Pancreas (tissue), 10 donors: ENCODE measurements at regions of chr1 and their contacts with region 1.

Region 1: DNA sequence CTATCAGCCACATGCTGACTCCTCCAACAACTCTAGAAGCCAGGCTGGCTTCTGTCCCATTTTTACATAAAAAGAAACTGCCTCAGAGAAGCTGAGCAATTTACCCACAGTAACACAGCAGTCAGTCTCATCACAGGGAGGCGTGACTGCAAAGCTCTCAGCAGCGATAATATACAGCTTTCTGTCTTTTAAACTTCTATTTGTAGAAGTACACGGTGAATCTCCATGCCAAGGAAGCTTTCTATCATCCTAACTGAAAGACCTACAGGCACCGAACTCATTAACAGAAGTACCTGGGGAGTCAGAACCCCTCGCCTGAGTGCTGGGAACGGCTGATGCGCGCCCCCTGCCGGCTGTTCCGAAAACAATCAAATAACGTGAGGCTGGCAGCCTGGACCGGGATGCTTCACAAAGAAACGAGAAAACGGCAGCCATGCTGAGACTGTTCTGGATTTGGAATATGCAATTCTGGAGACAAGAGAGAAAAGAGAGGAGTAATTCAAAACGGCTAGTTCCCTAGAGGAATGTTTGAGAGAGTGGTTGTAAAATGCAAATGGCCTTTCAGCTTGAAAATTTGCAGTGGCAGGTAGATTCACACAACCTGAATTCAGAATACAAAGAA is 43.5 kb upstream of the RAB4A start:
- DNase-seq: peak; percentile 68 to 92 (median 84)
- ATAC-seq: peak; percentile 29 to 66 (median 62)
- H3K4me3 ChIP-seq: no peak overlapping the region
- H3K27ac ChIP-seq: no peak overlapping the region
- H3K4me1 ChIP-seq: peaks cover 16 to 49% (median 31%) of the 10 kb centered on the region in 3 donors
- H3K27me3 ChIP-seq: no peaks in the 10 kb centered on the region
- CTCF ChIP-seq: peak; percentile 68 to 86 (median 82)

Region 2: DNA sequence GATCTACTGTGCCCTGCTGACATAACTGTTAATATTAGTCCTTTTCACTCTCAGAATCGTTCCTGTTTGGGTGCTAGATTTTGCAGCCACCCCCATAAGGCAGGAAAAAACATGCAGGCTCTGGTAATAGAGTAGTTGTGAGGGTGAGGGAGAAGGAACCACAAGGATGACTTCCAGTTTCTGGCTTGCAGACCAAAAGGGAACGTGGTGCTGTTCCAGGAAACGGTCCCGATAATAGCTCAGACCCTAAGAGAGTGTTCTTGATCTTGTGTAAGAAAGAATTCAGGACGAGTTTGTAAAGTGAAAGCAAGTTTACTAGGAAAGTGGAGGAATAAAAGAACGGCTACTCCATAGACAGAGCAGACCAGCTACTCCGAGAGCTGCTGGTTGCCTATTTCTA is 542.8 kb before region 1 on chr1:
- intact Hi-C with region 1: loop called in 1 of 3 experiments (anchors 10 kb)
- DNase-seq: no peak
- ATAC-seq: peak in 2 of 4 donors; percentile 52 to 54
- H3K4me3 ChIP-seq: no peak overlapping the region
- H3K27ac ChIP-seq: no peak overlapping the region
- H3K4me1 ChIP-seq: no peaks in the 10 kb centered on the region
- H3K27me3 ChIP-seq: peaks cover 0 to 4% (median 0%) of the 10 kb centered on the region in 4 donors
- CTCF ChIP-seq: no peak

Region 3: DNA sequence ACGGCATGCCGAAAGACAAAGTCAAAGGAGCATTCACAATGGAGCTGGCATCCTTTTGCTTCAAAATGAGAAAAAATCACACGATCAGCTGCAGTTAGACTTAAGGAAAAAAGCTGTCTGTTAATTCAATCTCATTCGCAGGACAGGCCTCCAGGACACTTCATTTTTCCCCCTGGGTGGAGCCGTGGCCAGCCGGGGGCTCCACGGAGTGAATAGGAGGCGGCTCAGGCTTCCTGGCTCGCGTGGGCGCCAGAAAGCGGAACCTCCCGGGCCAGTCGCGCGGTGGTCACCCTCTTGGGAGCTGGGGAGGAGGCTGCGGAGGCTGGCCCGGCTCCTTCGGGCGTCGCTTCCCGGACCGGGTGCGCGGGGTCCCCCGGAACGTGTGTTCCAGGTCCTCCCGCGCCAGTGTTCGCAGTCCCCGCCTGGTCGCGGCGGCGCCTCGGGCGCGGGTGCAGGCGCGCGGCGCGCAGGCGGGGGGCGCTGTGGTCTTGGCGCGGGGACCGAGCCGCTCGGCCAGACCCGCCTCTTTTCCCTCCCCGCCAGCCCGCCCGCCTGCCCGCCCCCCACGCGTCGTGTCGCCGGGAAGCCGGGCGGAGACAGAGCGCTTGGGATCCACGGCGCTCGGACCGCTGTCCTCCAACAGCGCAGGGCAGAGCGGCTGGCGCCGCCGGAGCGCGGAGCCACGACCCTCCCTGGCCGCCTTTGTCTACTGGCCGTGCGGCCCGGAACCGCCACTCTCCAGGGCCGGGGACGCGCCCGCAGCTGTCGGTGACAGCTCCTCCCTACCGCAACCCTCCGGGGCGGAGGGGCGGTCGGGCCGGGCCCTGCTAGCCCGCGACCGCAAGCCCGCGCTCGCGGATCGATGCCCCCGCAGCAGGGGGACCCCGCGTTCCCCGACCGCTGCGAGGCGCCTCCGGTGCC is 492.3 kb before region 1 on chr1 and contains the start of gene RHOU:
- intact Hi-C with region 1: loop called in 1 of 3 experiments (anchors 5 kb)
- DNase-seq: peak; percentile 74 to 94 (median 88)
- ATAC-seq: peak; percentile 89 to 95 (median 92)
- H3K4me3 ChIP-seq: peak within 1 kb of the TSS; percentile 87 to 97 (median 90)
- H3K27ac ChIP-seq: peak within 1 kb of the TSS; percentile 88 to 96 (median 94)
- H3K4me1 ChIP-seq: peaks cover 2 to 16% (median 15%) of the 10 kb centered on the region in 3 donors
- H3K27me3 ChIP-seq: no peaks in the 10 kb centered on the region
- CTCF ChIP-seq: peak; percentile 84 to 92 (median 87)
- total RNA-seq, gene RHOU: 5.4 to 14.1 (median 9.8) TPM